ENCODE measurements at regions of chr12 and their contacts with region 1.

Region 1: GRCh38 chr12:569803-570434 is 93.3 kb downstream of the NINJ2 start:
- DNase-seq: peak; percentile 93
- ATAC-seq: peak; percentile 89
- H3K4me3 ChIP-seq: peak overlapping the region; percentile 64
- H3K27ac ChIP-seq: peak overlapping the region; percentile 73
- H3K4me1 ChIP-seq: peaks cover 16% of the 10 kb centered on the region
- H3K27me3 ChIP-seq: no peaks in the 10 kb centered on the region
- CTCF ChIP-seq: peak; percentile 93

Region 2: DNA sequence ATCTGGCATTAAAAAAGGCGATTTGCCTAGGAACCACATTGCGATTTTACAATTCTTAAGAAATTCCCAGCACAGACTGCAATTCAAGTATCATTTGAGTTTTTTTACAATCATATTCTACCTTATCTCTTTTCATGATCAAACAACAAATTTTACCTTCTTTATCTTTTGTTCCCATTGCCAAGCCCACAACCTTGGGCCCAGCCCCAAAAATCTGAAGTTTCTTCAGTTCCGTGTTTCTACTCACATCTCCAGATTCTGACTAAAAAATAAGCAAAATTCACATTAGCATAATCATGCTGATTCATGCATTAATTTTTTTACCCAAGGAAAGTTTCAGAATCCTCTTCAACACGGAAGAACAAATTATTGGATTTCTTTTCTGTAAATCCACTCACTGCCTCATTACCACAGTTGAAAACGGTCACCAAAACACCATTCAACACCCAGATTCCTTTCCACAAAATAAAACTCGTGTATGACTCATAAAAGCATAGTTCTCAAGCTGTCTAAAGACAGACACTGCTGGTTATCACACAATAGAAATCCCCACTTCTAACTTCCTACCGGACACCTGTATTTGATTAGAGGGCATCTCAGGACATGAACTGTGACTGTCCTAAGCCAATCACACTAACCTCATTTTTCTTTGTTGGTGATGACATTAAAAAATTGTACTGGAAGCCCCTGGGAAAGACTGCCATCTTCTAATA is 213.5 kb before region 1 on chr12:
- intact Hi-C with region 1: no loop called
- DNase-seq: no peak
- ATAC-seq: no peak
- H3K4me3 ChIP-seq: no peak overlapping the region
- H3K27ac ChIP-seq: no peak overlapping the region
- H3K4me1 ChIP-seq: no peaks in the 10 kb centered on the region
- H3K27me3 ChIP-seq: no peaks in the 10 kb centered on the region
- CTCF ChIP-seq: no peak

Region 3: GRCh38 chr12:617304-617915 is 47.5 kb after region 1 on chr12:
- intact Hi-C with region 1: no loop called
- DNase-seq: peak; percentile 89
- ATAC-seq: peak; percentile 85
- H3K4me3 ChIP-seq: no peak overlapping the region
- H3K27ac ChIP-seq: peak overlapping the region; percentile 81
- H3K4me1 ChIP-seq: peaks cover 18% of the 10 kb centered on the region
- H3K27me3 ChIP-seq: no peaks in the 10 kb centered on the region
- CTCF ChIP-seq: no peak

Region 4: DNA sequence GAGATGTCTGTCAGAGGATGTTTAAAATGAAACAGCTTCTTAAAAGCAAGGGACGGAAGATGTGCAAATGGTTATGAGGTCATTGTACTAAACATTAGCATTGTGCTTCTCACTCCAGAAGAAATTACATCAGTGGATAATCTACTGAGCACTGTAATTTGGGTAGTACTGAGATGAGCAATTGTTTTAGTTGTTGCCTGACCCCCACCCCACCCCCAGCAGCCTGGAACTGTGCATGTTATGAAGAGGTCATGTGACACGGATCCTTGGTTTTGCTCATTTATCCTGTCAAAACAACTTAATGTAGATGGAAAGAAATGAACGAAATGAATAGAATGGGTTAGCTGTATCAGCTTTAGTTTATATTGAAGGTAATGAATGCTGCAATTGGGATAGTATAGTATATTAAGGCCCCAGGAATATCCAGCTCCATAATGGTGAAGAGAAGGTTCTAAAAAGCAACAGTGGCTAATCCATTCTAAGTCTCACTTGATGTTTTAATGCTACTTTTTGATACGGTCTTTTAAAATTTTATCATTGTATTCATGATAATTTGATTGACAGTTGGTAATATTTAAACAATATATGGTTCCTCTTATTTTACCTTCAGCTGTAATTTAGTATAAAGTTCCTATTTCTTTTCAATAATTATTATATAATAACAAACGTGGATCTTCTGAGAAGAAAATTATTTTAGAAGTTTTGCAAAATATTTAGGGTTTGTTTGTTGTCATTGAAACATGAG is 240.9 kb after region 1 on chr12:
- intact Hi-C with region 1: loop called (anchors 5 kb)
- DNase-seq: no peak
- ATAC-seq: no peak
- H3K4me3 ChIP-seq: no peak overlapping the region
- H3K27ac ChIP-seq: no peak overlapping the region
- H3K4me1 ChIP-seq: peaks cover 28% of the 10 kb centered on the region
- H3K27me3 ChIP-seq: no peaks in the 10 kb centered on the region
- CTCF ChIP-seq: no peak

Region 5: DNA sequence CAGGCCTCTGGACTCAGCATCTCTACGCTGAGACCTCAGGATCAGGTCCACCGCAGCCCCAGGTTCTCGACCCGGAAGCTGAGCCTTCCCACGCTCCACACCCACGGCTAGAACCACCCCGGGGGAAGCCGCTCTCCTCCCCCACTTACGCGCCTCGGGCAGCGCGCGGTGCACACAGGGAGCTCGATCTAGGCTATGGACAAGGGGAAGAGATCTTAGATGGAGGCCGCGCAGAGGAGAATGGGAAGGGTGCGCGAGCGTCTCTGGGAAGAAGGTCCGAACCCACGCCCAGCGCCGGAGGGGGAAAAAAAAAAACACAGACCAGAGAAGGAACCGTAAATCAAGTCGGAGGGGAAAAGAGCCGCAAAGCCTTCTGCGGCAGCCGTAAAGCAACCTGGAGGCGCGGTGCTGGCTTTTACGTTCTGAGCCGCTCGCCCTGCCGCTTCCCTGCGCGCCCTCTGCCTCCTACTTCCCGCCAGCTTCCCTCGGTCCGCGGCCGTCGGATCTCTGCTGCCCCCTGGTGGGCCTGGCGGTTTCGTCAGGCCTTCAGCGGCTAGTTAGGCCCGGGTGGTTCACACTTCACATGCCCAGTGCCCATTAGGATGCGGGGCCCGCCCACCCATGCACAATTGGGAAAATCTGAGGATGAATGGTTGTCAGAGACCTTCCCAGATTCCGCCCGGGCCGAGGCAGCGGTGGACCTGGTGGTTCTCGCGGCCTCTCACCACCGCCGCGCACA is 379.7 kb after region 1 on chr12 and contains the start of gene RAD52:
- intact Hi-C with region 1: loop called (anchors 5 kb)
- DNase-seq: peak; percentile 98
- ATAC-seq: peak; percentile 97
- H3K4me3 ChIP-seq: peak within 1 kb of the TSS; percentile 82
- H3K27ac ChIP-seq: peak within 1 kb of the TSS; percentile 89
- H3K4me1 ChIP-seq: peaks cover 10% of the 10 kb centered on the region
- H3K27me3 ChIP-seq: no peaks in the 10 kb centered on the region
- CTCF ChIP-seq: peak; percentile 97
- total RNA-seq, gene RAD52: 13.3 TPM

Measured in upper lobe of right lung (tissue), 1 donor.